CD8-positive, alpha-beta memory T cell (primary cell): ENCODE measurements at regions of chr6 and their contacts with region 1.

Region 1: DNA sequence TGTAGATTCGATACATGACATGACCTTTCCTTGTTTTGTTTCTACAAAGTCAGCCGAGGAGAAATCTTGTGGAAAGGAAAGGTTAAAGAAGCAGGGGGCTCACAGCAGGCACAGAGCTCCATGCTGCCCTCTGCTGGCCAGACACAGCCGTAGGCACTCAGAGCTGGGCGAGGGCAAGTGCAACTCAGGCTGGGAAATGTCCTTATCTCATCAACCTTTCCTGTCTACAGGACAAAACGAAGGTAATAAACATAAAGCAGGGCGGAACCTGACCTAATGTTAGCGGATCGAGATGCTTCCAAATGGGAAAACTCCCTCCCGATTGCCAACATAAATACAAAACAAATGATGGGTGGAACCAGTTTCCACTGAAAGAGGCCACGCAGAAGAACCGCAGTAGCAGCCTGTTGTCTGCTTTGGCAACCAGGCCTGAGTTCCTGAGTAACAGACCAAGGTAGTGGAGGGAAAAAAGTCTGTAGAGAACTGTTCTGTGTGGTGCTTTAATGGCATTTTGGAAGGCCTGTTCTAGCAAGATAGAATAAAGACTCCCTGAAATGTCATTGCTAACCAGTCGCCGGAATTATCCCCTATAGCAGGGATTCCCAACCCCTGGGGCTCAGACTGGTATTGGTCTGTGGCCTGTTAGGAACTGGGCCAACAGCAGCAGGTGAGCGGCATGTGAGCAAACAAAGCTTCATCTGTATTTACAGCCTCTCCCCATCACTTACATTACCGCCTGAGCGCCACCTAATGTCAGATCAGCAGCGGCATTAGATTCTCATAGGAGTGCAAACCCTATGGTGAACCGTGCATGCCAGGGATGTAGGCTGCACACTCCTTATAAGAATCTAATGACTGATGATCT is 85.2 kb downstream of the MBOAT1 start:
- DNase-seq: peak; percentile 19 to 67 (median 35)
- H3K4me3 ChIP-seq: no peak overlapping the region
- H3K4me3 Mint-ChIP-seq: no peak overlapping the region
- H3K27ac ChIP-seq: no peak overlapping the region
- H3K27ac Mint-ChIP-seq: peak overlapping the region in 2 of 8 donors; percentile 58 to 72
- H3K4me1 ChIP-seq: no peaks in the 10 kb centered on the region
- H3K4me1 Mint-ChIP-seq: peaks cover 5 to 7% (median 5%) of the 10 kb centered on the region in 3 donors
- H3K27me3 ChIP-seq: no peaks in the 10 kb centered on the region
- H3K27me3 Mint-ChIP-seq: no peaks in the 10 kb centered on the region

Region 2: DNA sequence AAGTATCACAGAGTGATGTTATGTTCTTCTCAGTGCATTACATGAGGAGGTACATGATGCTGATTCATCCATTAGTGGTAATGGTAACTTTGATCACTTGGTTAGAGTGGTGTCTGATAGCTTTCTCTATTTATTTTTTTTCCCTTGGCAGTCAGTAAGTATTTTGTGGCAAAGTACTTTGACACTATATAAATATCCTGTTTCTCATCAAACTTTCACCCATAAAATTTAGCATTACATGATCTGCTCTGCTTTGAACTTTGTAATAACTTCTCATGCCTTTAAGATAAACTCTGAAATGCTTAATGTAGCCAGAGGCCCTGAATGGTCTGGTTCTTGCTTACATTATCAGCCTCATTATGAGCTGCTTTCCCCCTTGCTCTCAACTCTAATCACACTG is 42.6 kb before region 1 on chr6:
- CTCF ChIA-PET with region 1: no interaction called
- POLR2A ChIA-PET with region 1: no interaction called
- DNase-seq: no peak
- H3K4me3 ChIP-seq: no peak overlapping the region
- H3K4me3 Mint-ChIP-seq: no peak overlapping the region
- H3K27ac ChIP-seq: no peak overlapping the region
- H3K27ac Mint-ChIP-seq: no peak overlapping the region
- H3K4me1 ChIP-seq: no peaks in the 10 kb centered on the region
- H3K4me1 Mint-ChIP-seq: no peaks in the 10 kb centered on the region
- H3K27me3 ChIP-seq: no peaks in the 10 kb centered on the region
- H3K27me3 Mint-ChIP-seq: no peaks in the 10 kb centered on the region

Region 3: GRCh38 chr6:20109526-20109925 is 17.5 kb before region 1 on chr6:
- CTCF ChIA-PET with region 1: interaction called, 10 read pairs
- POLR2A ChIA-PET with region 1: no interaction called
- DNase-seq: no peak
- H3K4me3 ChIP-seq: no peak overlapping the region
- H3K4me3 Mint-ChIP-seq: no peak overlapping the region
- H3K27ac ChIP-seq: no peak overlapping the region
- H3K27ac Mint-ChIP-seq: peak overlapping the region in 1 of 8 donors; percentile 82
- H3K4me1 ChIP-seq: no peaks in the 10 kb centered on the region
- H3K4me1 Mint-ChIP-seq: no peaks in the 10 kb centered on the region
- H3K27me3 ChIP-seq: no peaks in the 10 kb centered on the region
- H3K27me3 Mint-ChIP-seq: no peaks in the 10 kb centered on the region